Aorta (tissue), 5 donors: ENCODE measurements at regions of chr15 and their contacts with region 1.

Region 1: GRCh38 chr15:51104512-51104911 is 9.8 kb upstream of the TNFAIP8L3 start:
- DNase-seq: peak; percentile 83 to 87
- ATAC-seq: peak; percentile 86
- H3K4me3 ChIP-seq: no peak overlapping the region
- H3K27ac ChIP-seq: peak overlapping the region; percentile 36 to 61
- H3K4me1 ChIP-seq: peaks cover 3 to 8% of the 10 kb centered on the region in 2 donors
- H3K27me3 ChIP-seq: no peaks in the 10 kb centered on the region

Region 2: GRCh38 chr15:50979041-50979440 is 125.5 kb before region 1 on chr15:
- intact Hi-C with region 1: loop called in 1 of 2 experiments (anchors 5 kb)
- DNase-seq: no peak
- ATAC-seq: no peak
- H3K4me3 ChIP-seq: no peak overlapping the region
- H3K27ac ChIP-seq: no peak overlapping the region
- H3K4me1 ChIP-seq: no peaks in the 10 kb centered on the region
- H3K27me3 ChIP-seq: no peaks in the 10 kb centered on the region